ENCODE measurements at regions of chr18 and their contacts with region 1.

Region 1: GRCh38 chr18:13823707-13824395 is at the start of gene MC5R:
- DNase-seq: peak; percentile 81
- H3K4me3 Mint-ChIP-seq: peak within 1 kb of the TSS; percentile 50
- H3K27ac Mint-ChIP-seq: no peak within 1 kb of the TSS
- H3K4me1 Mint-ChIP-seq: no peaks in the 10 kb centered on the region
- H3K27me3 Mint-ChIP-seq: peaks cover 76% of the 10 kb centered on the region
- CTCF ChIP-seq: peak; percentile 87
- total RNA-seq, gene MC5R: not detected in 2 replicates

Region 2: DNA sequence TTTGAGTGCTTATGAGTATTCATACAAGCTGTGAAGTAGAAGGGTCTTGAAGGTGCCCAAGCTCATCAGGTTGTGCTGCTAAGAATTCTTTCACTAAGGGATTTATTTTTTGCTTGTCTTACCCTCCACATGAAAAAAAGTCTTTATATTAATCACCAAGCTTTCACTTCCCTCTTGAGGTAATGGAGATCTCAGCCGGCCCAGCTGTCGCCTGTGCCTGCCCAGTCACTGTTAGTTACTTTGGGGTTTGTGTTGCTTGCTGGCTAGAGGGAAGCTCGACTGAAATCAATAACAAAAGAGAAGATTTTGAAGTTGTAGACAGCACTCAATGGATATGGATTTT is 69.5 kb after region 1 on chr18:
- CTCF ChIA-PET with region 1: interaction called, 3 read pairs
- intact Hi-C with region 1: loop called (anchors 10 kb)
- DNase-seq: no peak
- H3K4me3 Mint-ChIP-seq: no peak overlapping the region
- H3K27ac Mint-ChIP-seq: no peak overlapping the region
- H3K4me1 Mint-ChIP-seq: no peaks in the 10 kb centered on the region
- H3K27me3 Mint-ChIP-seq: peaks cover 44% of the 10 kb centered on the region
- CTCF ChIP-seq: no peak

Region 3: DNA sequence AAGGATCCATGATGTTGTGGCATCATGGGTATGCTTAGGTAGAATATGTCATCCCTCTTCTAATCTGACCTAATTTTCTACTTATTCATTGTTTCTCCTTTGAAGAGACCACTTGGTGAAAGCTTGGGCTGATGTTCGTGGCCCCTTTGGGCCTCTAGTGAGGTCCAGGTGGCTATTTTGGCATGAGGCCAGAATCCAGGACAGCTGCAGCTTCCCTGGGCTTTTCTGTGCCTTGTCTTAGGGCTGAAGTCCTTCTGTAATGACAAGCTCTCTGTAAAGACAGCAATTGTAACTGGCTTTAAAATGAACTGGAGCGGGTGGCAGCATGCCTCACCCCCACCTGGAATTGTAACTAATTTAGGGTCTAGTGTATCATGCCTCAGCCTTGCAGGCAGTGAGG is 107.1 kb after region 1 on chr18:
- CTCF ChIA-PET with region 1: no interaction called
- intact Hi-C with region 1: no loop called
- DNase-seq: no peak
- H3K4me3 Mint-ChIP-seq: no peak overlapping the region
- H3K27ac Mint-ChIP-seq: no peak overlapping the region
- H3K4me1 Mint-ChIP-seq: no peaks in the 10 kb centered on the region
- H3K27me3 Mint-ChIP-seq: peaks cover 25% of the 10 kb centered on the region
- CTCF ChIP-seq: no peak

Region 4: DNA sequence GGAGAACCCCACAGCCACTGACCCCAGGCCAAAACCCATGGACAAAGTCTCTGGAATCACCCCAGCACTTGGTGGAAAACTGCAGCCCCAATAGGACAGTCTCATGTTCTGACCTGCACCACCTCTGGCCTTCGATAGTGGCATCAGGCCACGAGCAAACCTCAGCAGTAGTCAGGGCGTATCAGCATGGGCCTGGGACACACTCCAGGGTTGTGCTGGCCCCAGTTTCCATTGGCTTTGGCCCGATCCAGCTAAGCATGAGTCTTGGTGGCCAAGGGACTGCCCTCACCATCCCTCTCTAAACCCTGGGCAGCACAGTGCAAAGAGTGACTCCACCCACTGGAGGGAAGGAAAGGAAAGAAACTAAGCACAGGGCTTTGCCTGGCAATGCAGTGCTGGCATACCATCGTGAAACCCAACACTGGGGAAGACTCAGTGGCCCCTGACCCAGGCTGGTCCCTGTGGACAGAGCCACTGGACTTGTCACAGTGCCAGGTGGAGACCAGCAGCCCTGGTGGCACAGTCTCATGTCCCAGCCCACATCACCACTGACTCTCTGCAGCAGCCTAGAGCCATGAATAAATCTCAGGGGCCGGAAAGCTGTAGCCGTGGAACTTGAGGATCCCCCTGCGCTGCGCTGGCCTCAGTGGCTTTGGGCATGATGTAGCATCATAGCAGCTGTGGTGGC is 262.1 kb after region 1 on chr18:
- CTCF ChIA-PET with region 1: interaction called, 3 read pairs
- intact Hi-C with region 1: loop called (anchors 2 kb)
- DNase-seq: no peak
- H3K4me3 Mint-ChIP-seq: no peak overlapping the region
- H3K27ac Mint-ChIP-seq: no peak overlapping the region
- H3K4me1 Mint-ChIP-seq: no peaks in the 10 kb centered on the region
- H3K27me3 Mint-ChIP-seq: no peaks in the 10 kb centered on the region
- CTCF ChIP-seq: no peak

Region 5: GRCh38 chr18:14117606-14118005 is 293.8 kb after region 1 on chr18:
- CTCF ChIA-PET with region 1: no interaction called
- intact Hi-C with region 1: no loop called
- DNase-seq: no peak
- H3K4me3 Mint-ChIP-seq: no peak overlapping the region
- H3K27ac Mint-ChIP-seq: no peak overlapping the region
- H3K4me1 Mint-ChIP-seq: no peaks in the 10 kb centered on the region
- H3K27me3 Mint-ChIP-seq: no peaks in the 10 kb centered on the region
- CTCF ChIP-seq: no peak

Measured in Calu3 (cell line).